Mammary epithelial cell (primary cell): ENCODE measurements at regions of chr19 and their contacts with region 1.

Region 1: DNA sequence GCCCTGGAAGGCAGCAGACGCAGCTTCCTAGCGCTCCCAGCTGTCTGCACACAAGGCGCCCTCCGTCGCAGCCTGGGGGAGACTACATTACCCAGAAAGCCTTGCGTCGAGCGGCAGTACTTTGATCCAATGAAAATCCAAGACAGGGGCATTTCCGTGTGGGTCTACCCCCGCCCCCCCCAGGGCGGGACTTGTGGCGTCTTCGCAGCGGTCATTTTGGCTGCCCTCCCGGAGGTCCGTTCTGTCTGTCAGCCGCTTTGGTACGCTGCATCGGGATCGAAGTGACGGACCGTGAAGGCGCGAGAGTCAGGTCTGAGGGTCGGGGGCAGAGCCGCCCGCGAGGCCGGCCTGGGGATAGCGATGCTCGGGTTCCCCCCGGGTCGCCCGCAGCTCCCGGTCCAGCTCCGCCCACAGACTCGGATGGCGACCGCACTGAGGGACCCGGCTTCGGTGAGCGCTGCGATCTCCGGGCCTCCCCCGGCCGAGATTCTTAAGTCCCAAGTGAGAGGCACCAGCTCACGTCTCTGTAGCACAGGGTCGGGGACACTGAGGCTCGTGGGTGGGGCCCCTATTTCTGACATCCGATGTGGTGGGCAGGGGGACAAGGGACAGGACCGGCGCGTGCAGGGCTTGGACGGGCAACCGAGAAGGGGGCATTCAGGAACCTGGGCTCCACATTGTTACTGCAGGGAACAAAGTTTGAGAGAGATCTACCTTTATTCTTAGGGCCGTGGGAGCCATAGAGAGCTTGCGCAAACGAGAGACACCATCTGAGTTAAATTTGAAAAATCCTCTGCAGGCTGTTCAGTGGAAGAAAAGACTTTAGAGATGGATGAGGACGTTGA is at the start of gene ZNF211:
- DNase-seq: peak; percentile 89
- H3K4me3 ChIP-seq: peak within 1 kb of the TSS; percentile 86 to 95 (median 93)
- H3K27ac ChIP-seq: peak within 1 kb of the TSS; percentile 72
- H3K4me1 ChIP-seq: no peaks in the 10 kb centered on the region
- H3K27me3 ChIP-seq: no peaks in the 10 kb centered on the region
- CTCF ChIP-seq: no peak
- total RNA-seq, gene ZNF211: 11.4 to 13.5 TPM

Region 2: GRCh38 chr19:57587529-57587928 is 45.7 kb before region 1 on chr19:
- CTCF ChIA-PET with region 1: no interaction called
- dilution Hi-C with region 1: no loop called
- in situ Hi-C with region 1: no loop called
- intact Hi-C with region 1: no loop called
- DNase-seq: peak; percentile 83
- H3K4me3 ChIP-seq: no peak overlapping the region
- H3K27ac ChIP-seq: no peak overlapping the region
- H3K4me1 ChIP-seq: peaks cover 9% of the 10 kb centered on the region
- H3K27me3 ChIP-seq: no peaks in the 10 kb centered on the region
- CTCF ChIP-seq: no peak

Region 3: DNA sequence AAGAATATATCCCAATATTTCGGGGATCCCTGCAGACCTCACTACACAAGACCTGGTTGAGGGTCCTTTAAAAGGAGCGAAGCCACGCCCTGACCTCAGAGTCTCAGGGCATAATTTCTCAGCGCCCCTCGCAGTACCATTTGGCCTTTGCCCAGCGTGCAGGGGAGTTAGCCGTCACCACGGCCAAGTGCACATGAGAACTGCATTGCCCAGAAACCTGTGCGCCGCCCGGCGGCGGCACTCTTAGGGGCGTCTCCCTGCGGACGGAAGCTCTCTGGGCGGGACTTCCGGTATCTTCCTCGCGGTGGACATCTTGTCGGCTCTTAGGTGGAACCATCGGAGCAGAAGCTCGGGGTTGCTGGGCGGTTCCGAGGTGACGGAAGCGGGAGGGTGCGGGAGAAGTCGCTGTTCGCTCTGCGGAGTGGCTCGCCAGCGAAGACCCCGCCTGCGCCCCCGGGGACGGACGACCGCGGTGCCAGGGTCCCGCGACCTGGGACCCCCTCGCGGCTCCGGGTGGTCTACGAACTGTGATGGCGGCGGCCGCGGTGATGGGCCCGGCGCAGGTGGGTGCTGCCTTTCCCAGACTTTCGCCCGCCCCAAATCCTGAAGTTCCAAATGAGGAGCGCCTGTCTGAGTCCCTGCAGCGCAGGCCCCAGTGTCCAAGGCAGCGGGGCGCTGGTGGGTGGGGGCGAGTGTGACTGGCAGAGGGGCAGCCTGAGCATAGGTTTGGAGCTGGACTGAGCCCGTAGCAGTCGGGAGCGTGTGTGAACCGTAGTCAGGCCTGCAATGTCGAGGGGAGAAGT is 19.1 kb before region 1 on chr19 and contains the start of gene ZNF134:
- CTCF ChIA-PET with region 1: no interaction called
- dilution Hi-C with region 1: no loop called
- in situ Hi-C with region 1: no loop called
- intact Hi-C with region 1: loop called (anchors 1 kb)
- DNase-seq: peak; percentile 82
- H3K4me3 ChIP-seq: peak within 1 kb of the TSS; percentile 88 to 99 (median 91)
- H3K27ac ChIP-seq: peak within 1 kb of the TSS; percentile 25
- H3K4me1 ChIP-seq: peaks cover 3% of the 10 kb centered on the region
- H3K27me3 ChIP-seq: no peaks in the 10 kb centered on the region
- CTCF ChIP-seq: peak; percentile 8 to 71
- total RNA-seq, gene ZNF134: 21.7 to 32.0 TPM

Region 4: GRCh38 chr19:57682226-57682766 is 49.1 kb after region 1 on chr19:
- CTCF ChIA-PET with region 1: no interaction called
- dilution Hi-C with region 1: no loop called
- in situ Hi-C with region 1: no loop called
- intact Hi-C with region 1: loop called (anchors 2 kb)
- DNase-seq: no peak
- H3K4me3 ChIP-seq: peak overlapping the region; percentile 65 to 81 (median 75)
- H3K27ac ChIP-seq: peak overlapping the region; percentile 16
- H3K4me1 ChIP-seq: peaks cover 9% of the 10 kb centered on the region
- H3K27me3 ChIP-seq: no peaks in the 10 kb centered on the region
- CTCF ChIP-seq: no peak